PC-3 (cell line): ENCODE measurements at regions of chr6 and their contacts with region 1.

Region 1: GRCh38 chr6:27864906-27865849 is 47.0 kb downstream of the OR2B2 start:
- DNase-seq: peak; percentile 98
- ATAC-seq: peak; percentile 85
- H3K4me3 ChIP-seq: peak overlapping the region; percentile 74
- H3K27ac ChIP-seq: peak overlapping the region; percentile 35
- H3K4me1 ChIP-seq: peaks cover 21% of the 10 kb centered on the region
- H3K27me3 ChIP-seq: no peaks in the 10 kb centered on the region
- CTCF ChIP-seq: no peak

Region 2: DNA sequence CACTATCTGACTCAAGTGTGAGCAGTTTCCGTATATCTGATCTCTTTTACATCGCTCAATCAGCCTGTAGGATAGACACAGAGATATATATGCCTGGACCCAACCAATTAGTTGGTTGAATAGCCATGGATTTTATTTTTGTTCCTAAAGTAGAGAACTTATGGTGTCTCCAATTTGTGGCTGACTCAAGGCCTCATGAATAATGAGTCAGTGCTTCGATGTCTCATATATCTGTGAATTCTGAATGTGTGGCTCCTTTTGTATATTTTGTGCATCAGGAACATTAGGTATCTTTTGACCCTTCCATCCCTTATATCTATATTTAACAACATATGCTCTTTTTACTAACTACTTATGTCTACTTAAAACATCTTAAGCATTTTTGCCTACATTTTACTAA is 17.5 kb before region 1 on chr6:
- CTCF ChIA-PET with region 1: no interaction called
- POLR2A ChIA-PET with region 1: interaction called, 5 read pairs
- intact Hi-C with region 1: loop called (anchors 2 kb)
- DNase-seq: peak; percentile 45
- ATAC-seq: peak; percentile 78
- H3K4me3 ChIP-seq: no peak overlapping the region
- H3K27ac ChIP-seq: peak overlapping the region; percentile 74
- H3K4me1 ChIP-seq: peaks cover 16% of the 10 kb centered on the region
- H3K27me3 ChIP-seq: no peaks in the 10 kb centered on the region
- CTCF ChIP-seq: no peak